ENCODE measurements at regions of chr10 and their contacts with region 1.

Region 1: GRCh38 chr10:6580279-6581029 is 378 bp upstream of the PRKCQ start:
- DNase-seq: peak; percentile 88
- H3K4me3 Mint-ChIP-seq: peak overlapping the region; percentile 94
- H3K27ac Mint-ChIP-seq: peak overlapping the region; percentile 98
- H3K4me1 Mint-ChIP-seq: peaks cover 42% of the 10 kb centered on the region
- H3K27me3 Mint-ChIP-seq: no peaks in the 10 kb centered on the region

Region 2: DNA sequence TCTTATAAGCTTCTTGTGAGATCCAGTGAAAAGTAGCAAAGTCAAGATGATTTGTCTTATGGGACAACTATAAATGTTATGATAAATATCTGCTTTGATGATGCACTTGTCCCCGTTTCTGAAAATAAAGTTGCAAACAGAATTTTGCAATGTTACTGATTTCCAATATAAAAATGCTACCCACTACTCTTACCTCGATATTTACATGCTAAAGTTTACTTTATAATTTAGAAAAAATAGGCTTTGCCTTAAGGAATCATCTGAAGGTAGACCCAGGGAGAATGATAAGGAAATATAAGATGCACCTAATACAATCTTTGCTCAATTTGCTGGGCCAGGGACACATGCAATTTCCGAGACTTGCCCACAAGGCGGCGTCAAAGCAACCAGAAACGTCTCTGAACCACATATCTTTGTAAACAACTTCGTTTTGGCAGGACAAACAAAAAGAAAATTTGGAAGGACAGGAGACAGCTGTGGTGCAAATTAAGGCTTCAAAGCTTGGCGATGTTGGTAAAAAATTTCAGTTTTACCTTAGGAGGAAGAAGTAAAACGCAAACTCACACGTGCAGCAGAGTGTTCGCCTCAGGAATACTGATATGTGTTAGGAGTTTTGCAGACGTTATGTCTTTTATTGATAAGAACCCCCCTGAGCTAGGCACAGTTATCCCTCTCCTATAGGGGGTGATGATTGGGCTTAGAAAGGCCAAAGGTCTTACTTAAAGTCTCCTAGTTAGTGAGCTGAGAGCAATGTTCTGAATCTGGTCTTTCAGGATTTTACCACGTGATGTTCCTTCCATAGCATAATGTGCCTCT is 134.7 kb before region 1 on chr10:
- CTCF ChIA-PET with region 1: interaction called, 14 read pairs
- DNase-seq: peak; percentile 81
- H3K4me3 Mint-ChIP-seq: no peak overlapping the region
- H3K27ac Mint-ChIP-seq: peak overlapping the region; percentile 34
- H3K4me1 Mint-ChIP-seq: peaks cover 42% of the 10 kb centered on the region
- H3K27me3 Mint-ChIP-seq: no peaks in the 10 kb centered on the region

Region 3: DNA sequence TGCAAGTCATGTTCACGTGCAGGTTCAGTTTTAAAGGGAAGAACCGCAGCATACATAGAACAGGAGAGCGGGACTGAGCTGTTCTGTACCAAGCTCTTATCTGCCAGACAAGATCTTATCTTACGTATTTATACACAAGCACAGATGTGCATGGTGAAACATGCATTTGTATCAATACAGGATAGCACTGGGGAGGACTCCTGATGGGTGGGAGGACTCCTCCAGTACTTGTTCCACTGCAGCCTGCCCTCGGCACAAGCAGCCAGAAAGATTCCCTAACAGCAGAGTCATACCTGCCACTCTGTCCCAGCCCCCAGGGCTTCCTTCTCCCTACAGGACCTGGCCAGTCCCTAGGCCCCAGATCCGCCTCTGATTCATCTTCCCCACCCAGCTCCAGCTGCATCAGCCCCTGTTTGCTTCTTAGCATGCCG is 12.8 kb after region 1 on chr10:
- CTCF ChIA-PET with region 1: interaction called, 40 read pairs
- DNase-seq: peak; percentile 49
- H3K4me3 Mint-ChIP-seq: peak overlapping the region; percentile 54
- H3K27ac Mint-ChIP-seq: peak overlapping the region; percentile 98
- H3K4me1 Mint-ChIP-seq: peaks cover 96% of the 10 kb centered on the region
- H3K27me3 Mint-ChIP-seq: no peaks in the 10 kb centered on the region

Region 4: GRCh38 chr10:6607778-6608177 is 27.3 kb after region 1 on chr10:
- CTCF ChIA-PET with region 1: interaction called, 37 read pairs
- DNase-seq: no peak
- H3K4me3 Mint-ChIP-seq: no peak overlapping the region
- H3K27ac Mint-ChIP-seq: peak overlapping the region; percentile 93
- H3K4me1 Mint-ChIP-seq: peaks cover 90% of the 10 kb centered on the region
- H3K27me3 Mint-ChIP-seq: no peaks in the 10 kb centered on the region

Region 5: GRCh38 chr10:6659471-6659870 is 79.0 kb after region 1 on chr10:
- CTCF ChIA-PET with region 1: interaction called, 12 read pairs
- DNase-seq: no peak
- H3K4me3 Mint-ChIP-seq: no peak overlapping the region
- H3K27ac Mint-ChIP-seq: no peak overlapping the region
- H3K4me1 Mint-ChIP-seq: peaks cover 15% of the 10 kb centered on the region
- H3K27me3 Mint-ChIP-seq: peaks cover 6% of the 10 kb centered on the region

Region 6: GRCh38 chr10:6713716-6714115 is 133.3 kb after region 1 on chr10:
- CTCF ChIA-PET with region 1: no interaction called
- DNase-seq: peak; percentile 43
- H3K4me3 Mint-ChIP-seq: no peak overlapping the region
- H3K27ac Mint-ChIP-seq: no peak overlapping the region
- H3K4me1 Mint-ChIP-seq: peaks cover 10% of the 10 kb centered on the region
- H3K27me3 Mint-ChIP-seq: peaks cover 43% of the 10 kb centered on the region